ENCODE measurements at regions of chr7 and their contacts with region 1.

Region 1: DNA sequence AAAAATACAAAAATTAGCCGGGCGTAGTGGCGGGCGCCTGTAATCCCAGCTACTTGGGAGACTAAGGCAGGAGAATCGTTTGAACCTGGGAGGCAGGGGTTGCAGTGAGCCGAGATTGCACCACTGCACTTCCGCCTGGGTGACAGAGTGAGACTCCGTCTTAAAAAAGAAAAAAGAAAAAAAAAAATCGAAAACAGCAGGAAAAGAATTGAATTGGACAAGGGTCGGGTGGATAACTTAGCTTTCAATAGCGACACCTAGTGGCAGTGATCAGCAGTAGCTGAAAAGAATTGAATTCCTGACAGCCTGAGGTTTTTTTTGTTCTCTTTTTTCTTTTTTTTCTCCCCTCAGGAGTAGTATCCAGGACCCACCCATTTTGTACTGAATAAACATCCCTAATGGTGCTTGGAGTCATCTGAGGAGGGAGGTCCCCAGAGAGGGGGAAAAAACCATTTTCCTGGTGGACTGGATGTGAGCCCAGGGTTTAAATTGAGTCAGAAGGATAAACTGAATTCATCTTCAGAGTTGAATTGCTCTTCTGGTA is 55.1 kb downstream of the CYCS start:
- DNase-seq: peak; percentile 66
- H3K4me3 ChIP-seq: peak overlapping the region in 2 of 4 donors; percentile 24 to 25
- H3K27ac ChIP-seq: no peak overlapping the region
- H3K4me1 ChIP-seq: no peaks in the 10 kb centered on the region
- H3K27me3 ChIP-seq: no peaks in the 10 kb centered on the region
- CTCF ChIP-seq: peak; percentile 47 to 87 (median 72)
- EP300 ChIP-seq: no peak
- POLR2A ChIP-seq: no peak

Region 2: GRCh38 chr7:24778543-24779282 is 291.3 kb before region 1 on chr7:
- intact Hi-C with region 1: no loop called
- DNase-seq: peak; percentile 70
- H3K4me3 ChIP-seq: no peak overlapping the region
- H3K27ac ChIP-seq: no peak overlapping the region
- H3K4me1 ChIP-seq: no peaks in the 10 kb centered on the region
- H3K27me3 ChIP-seq: no peaks in the 10 kb centered on the region
- CTCF ChIP-seq: no peak
- EP300 ChIP-seq: no peak
- POLR2A ChIP-seq: no peak

Region 3: GRCh38 chr7:24812310-24812945 is 257.5 kb before region 1 on chr7:
- intact Hi-C with region 1: loop called (anchors 2 kb)
- DNase-seq: no peak
- H3K4me3 ChIP-seq: no peak overlapping the region
- H3K27ac ChIP-seq: no peak overlapping the region
- H3K4me1 ChIP-seq: no peaks in the 10 kb centered on the region
- H3K27me3 ChIP-seq: no peaks in the 10 kb centered on the region
- CTCF ChIP-seq: peak; percentile 47 to 87 (median 70)
- EP300 ChIP-seq: no peak
- POLR2A ChIP-seq: no peak

Region 4: GRCh38 chr7:24819916-24820689 is 249.9 kb before region 1 on chr7:
- intact Hi-C with region 1: loop called (anchors 1 kb)
- DNase-seq: peak; percentile 89
- H3K4me3 ChIP-seq: no peak overlapping the region
- H3K27ac ChIP-seq: peak overlapping the region in 2 of 4 donors; percentile 44 to 51
- H3K4me1 ChIP-seq: peaks cover 0 to 13% (median 4%) of the 10 kb centered on the region in 4 donors
- H3K27me3 ChIP-seq: no peaks in the 10 kb centered on the region
- CTCF ChIP-seq: peak; percentile 61 to 76 (median 72)
- EP300 ChIP-seq: no peak
- POLR2A ChIP-seq: no peak

Region 5: GRCh38 chr7:24979863-24980533 is 90.0 kb before region 1 on chr7 and contains the start of gene OSBPL3:
- intact Hi-C with region 1: loop called (anchors 2 kb)
- DNase-seq: peak; percentile 97
- H3K4me3 ChIP-seq: peak within 1 kb of the TSS; percentile 49 to 76 (median 66)
- H3K27ac ChIP-seq: peak within 1 kb of the TSS; percentile 78 to 87 (median 80)
- H3K4me1 ChIP-seq: peaks cover 0 to 29% (median 21%) of the 10 kb centered on the region in 4 donors
- H3K27me3 ChIP-seq: peaks cover 0 to 8% (median 0%) of the 10 kb centered on the region in 3 donors
- CTCF ChIP-seq: no peak
- EP300 ChIP-seq: no peak
- POLR2A ChIP-seq: no peak
- total RNA-seq, gene OSBPL3: 1.8 to 2.2 (median 1.9) TPM